GM13976 (cell line): ENCODE measurements at regions of chr5 and their contacts with region 1.

Region 1: DNA sequence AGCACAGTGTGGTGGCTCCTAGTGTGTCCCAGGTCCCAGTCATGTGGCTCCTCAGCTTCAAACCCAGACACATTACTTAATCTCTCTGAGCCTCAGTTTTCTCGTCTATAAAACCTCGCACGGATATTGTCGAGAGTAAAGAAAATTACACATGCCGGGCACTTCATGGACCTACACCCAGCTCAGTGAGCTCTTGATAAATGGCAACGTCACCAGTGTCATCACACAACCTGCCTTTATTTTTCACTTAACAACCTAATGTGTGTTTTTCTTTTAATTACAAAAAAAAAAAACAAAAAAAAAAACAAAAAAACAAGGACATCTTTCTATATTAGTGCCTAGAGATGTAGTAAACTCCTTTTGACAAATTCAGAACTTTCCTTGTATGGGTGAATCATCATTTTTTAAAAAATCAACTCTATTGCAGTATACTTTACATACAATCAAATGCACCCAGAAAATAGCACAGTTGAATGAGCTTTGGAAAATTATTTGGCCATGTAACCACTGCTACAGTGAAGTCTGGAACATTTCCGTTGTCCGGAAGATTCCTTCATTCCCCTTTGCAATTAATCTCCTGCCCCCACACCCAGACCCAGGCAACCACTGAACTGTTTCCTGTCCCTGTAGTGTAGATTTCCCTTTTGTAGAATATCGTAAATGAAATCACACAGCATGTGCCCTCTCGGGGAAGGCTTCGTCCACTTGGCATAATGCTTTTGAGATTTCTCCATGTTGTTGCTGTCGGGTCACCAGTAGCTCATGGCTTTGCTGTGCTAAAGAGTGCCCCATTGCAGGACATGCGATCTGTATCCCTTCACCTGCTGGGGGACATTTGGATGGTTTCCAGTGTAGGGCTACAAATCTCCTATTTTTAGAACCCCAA is 100.4 kb upstream of the LARP1 start:
- DNase-seq: no peak
- CTCF ChIP-seq: no peak

Region 2: GRCh38 chr5:154811653-154812365 is 157.1 kb after region 1 on chr5:
- in situ Hi-C with region 1: loop called (anchors 10 kb)
- DNase-seq: peak; percentile 77
- CTCF ChIP-seq: peak; percentile 75